Activated CD8-positive, alpha-beta T cell treated with anti-CD3 and anti-CD28 coated beads for 36 hours (primary cell): ENCODE measurements at regions of chr10 and their contacts with region 1.

Region 1: DNA sequence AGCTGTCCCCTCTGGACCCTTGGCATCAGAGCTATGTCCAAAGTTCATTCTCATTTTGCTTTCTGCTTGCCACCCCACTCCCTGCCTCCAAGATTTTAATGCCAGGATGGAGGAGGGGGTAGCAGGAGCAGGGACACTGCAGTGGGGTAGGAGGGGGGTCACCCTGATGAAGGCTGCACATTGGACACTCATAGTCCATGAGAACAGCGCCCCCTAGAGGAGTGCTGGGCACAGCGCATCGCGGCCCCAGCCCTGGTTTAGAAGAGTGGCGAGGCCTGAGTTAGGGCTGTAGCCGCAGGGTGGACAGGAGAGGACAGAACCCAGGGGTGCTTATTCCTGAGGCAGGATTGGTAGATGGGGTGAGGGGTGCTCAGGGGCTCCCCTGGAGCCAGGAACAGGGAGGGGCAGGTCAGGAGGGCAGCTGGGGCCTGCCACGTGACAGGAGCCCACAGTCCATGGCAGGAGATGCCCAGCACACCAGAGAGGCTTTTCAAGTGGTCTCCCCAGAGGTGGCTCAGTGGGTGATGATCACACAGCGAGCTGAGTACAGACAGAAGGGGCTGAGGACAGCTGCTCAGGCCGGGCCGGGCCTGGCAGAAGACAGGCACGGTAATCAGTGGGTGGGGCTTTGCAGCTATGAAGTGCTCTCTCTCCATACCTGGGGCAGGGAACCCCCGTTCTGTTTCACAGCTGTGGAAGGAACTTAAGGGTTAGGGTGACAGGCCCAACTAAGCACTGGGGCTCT is 71.4 kb downstream of the NEURL1 start:
- DNase-seq: peak; percentile 74
- ATAC-seq: peak; percentile 85
- H3K4me3 Mint-ChIP-seq: no peak overlapping the region
- H3K27ac Mint-ChIP-seq: no peak overlapping the region
- H3K4me1 Mint-ChIP-seq: no peaks in the 10 kb centered on the region
- H3K27me3 Mint-ChIP-seq: peaks cover 2% of the 10 kb centered on the region
- CTCF ChIP-seq: peak; percentile 92

Region 2: DNA sequence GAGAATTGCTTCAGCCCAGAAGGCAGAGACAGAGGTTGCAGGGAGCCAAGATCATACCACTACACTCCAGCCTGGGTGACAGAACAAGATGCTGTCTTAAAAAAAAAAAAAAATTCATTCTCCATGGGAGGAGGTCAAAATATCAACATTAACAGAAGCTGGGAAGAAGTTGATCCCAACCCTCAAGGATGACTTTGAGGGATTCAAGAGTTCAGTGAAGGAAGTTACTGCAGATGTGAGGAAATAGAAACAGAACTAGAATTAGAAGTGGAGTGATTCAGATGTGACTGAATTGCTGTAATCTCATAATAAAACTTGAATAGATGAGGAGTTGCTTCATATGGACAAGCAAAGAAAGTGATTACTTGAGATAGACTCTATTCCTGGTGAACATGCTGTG is 339.0 kb before region 1 on chr10:
- CTCF ChIA-PET with region 1: no interaction called
- POLR2A ChIA-PET with region 1: no interaction called
- intact Hi-C with region 1: no loop called
- DNase-seq: no peak
- ATAC-seq: no peak
- H3K4me3 Mint-ChIP-seq: no peak overlapping the region
- H3K27ac Mint-ChIP-seq: no peak overlapping the region
- H3K4me1 Mint-ChIP-seq: no peaks in the 10 kb centered on the region
- H3K27me3 Mint-ChIP-seq: no peaks in the 10 kb centered on the region
- CTCF ChIP-seq: no peak

Region 3: DNA sequence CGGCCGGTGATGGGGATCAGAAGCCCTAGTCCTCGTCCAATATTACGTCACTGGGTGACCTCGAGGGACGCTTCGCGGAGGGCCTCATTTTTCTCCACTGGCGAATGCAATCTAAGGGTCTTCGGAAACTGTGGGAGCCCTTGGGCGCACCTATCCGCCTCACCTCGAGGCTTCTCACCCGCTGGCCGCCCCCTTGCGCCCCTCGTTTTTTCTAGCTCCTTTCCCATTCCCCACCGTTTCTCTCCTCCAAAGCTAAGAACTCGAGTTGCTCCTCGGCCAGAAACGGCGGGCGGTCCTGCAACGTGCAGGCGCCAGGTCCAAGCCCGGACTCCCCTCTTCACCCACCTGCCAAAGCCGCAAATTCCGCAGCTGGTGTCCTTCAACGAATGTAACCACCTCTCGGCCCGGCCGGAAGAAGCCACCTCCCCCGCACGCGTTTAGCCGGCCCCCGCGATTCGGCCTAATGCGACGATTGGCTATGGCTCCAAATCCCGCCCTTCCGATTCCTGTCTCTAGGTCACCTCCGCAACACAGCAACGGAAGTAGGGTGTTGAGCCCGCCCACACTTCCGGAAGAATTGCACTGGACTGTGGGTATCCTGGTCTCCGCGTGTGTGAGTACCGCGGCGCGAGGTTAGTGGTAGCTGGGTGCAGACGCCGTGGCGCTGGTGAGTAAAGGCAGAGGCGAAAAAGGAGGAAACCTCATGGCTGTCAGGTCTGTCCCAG is 168.7 kb before region 1 on chr10 and contains the starts of genes ATP5MK and PDCD11:
- CTCF ChIA-PET with region 1: no interaction called
- POLR2A ChIA-PET with region 1: no interaction called
- intact Hi-C with region 1: no loop called
- DNase-seq: peak; percentile 99
- ATAC-seq: peak; percentile 100
- H3K4me3 Mint-ChIP-seq: peak within 1 kb of the TSS; percentile 88
- H3K27ac Mint-ChIP-seq: peak within 1 kb of the TSS; percentile 97
- H3K4me1 Mint-ChIP-seq: peaks cover 59% of the 10 kb centered on the region
- H3K27me3 Mint-ChIP-seq: no peaks in the 10 kb centered on the region
- CTCF ChIP-seq: no peak
- total RNA-seq, gene ATP5MK: 404 to 425 TPM
- total RNA-seq, gene PDCD11: 63.7 to 68.8 TPM

Region 4: DNA sequence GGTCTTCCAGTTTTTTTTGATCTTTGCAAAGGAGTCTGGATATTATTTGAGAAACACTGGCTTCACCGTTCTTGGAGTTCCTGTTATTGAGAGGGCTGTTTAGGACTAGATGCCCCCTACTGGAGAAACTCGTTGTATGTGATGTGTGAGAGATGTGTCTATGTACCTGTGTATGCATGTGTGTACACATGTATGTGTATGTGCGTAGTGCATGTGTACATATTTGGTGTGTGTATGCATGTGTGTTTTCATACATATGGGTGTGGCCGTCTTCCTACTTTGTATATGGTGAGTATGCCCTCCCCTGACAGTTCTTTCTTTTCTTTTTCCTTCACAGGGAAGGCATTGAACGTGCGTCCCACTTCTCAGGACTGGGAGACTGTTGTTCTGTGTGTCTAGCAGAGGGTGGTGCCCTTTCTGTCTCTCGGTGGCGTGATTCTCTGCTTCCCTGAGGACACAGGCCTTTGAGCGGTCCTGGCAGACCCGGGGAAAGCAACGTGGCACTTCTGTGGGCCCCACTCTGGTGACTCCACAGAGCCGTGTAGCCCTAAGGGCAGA is 82.9 kb before region 1 on chr10:
- CTCF ChIA-PET with region 1: interaction called, 14 read pairs
- POLR2A ChIA-PET with region 1: no interaction called
- intact Hi-C with region 1: no loop called
- DNase-seq: peak; percentile 46
- ATAC-seq: peak; percentile 79
- H3K4me3 Mint-ChIP-seq: no peak overlapping the region
- H3K27ac Mint-ChIP-seq: no peak overlapping the region
- H3K4me1 Mint-ChIP-seq: peaks cover 4% of the 10 kb centered on the region
- H3K27me3 Mint-ChIP-seq: no peaks in the 10 kb centered on the region
- CTCF ChIP-seq: peak; percentile 69

Region 5: DNA sequence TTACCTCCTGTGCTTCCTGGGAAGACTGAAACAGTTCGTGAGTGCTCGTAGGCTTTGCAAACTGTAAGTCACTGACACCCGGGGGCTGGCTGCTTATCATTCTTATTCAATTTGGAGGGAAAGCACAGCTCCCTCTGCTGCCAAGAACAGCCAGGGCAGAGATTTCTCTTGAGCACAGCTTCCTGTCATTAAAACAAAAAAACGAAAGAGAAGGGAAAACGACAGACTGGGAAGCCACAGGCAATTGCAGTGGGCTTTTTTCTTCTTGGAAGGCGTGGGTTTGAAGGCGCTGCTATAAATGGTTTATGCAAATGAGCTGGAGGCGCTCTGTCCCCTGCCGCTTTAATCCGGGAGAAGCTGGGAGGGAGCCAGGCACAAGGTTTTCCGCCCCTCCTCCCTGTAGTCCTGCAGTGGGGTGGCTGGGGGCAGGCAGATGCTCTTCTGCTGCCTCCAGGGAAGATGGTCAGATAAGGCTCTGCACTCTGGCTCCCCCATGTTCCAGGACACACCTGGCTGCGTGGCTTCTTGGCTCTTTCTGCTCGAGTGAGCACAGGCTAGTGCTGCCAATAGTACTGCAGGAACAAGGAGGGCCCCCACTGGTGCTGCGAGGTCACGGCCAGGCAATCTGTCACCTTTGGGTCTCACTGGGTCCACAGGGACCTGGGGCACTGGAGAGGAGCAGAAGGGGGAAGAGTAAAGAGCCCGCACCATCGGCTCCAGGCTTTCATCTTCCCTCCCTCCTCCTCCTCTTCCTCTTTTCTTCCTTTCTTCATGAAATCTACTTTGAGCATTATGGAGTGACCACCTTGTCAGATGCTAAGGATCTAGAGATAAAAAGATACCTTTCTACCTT is 22.0 kb before region 1 on chr10:
- CTCF ChIA-PET with region 1: interaction called, 21 read pairs
- POLR2A ChIA-PET with region 1: no interaction called
- intact Hi-C with region 1: no loop called
- DNase-seq: peak; percentile 64
- ATAC-seq: peak; percentile 78
- H3K4me3 Mint-ChIP-seq: peak overlapping the region; percentile 48
- H3K27ac Mint-ChIP-seq: no peak overlapping the region
- H3K4me1 Mint-ChIP-seq: peaks cover 14% of the 10 kb centered on the region
- H3K27me3 Mint-ChIP-seq: peaks cover 9% of the 10 kb centered on the region
- CTCF ChIP-seq: peak; percentile 49

Region 6: DNA sequence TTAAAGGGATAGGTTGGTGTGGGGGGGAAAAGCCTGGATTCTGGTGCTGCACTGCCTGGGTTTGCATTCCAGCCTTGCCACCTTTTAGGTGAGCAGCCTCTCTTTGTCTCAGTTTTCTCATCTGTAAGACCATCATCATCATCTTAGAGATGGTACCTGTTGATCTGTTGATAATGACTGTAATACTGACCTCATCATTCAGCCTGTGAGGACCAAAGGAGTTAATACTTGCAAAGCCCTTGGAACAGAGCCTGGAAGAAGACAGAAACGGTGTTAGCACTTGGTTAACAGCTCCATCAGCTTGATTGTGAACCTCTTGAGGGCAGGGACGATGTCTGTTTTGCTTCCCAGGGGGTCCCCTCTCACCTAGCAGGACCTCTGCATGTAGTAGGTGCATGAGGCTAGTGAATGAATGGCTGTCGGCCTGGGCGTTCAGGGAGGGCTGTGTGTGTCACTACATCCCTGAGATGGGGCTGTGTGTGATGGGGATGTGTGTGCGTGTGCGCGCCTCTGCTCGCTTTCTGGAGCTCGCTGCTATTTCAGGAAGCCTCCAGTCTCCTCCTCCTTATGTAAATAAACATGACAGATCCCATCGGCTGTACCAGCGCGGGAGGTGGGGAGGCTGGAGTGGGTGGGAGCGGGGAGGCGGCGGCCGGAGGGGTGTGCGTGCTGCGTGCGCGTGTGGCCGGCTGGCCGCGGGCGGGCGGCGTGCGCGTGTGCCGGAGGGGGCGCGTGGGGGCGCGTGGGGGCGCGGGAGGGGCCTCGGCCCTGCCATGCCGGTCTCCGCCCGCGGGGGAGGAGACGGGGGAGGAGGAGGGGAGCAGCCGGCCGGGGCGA is 10.2 kb before region 1 on chr10:
- CTCF ChIA-PET with region 1: interaction called, 21 read pairs
- POLR2A ChIA-PET with region 1: interaction called, 4 read pairs
- intact Hi-C with region 1: no loop called
- DNase-seq: peak; percentile 43
- ATAC-seq: peak; percentile 46
- H3K4me3 Mint-ChIP-seq: peak overlapping the region; percentile 60
- H3K27ac Mint-ChIP-seq: no peak overlapping the region
- H3K4me1 Mint-ChIP-seq: peaks cover 18% of the 10 kb centered on the region
- H3K27me3 Mint-ChIP-seq: peaks cover 30% of the 10 kb centered on the region
- CTCF ChIP-seq: no peak

Region 7: DNA sequence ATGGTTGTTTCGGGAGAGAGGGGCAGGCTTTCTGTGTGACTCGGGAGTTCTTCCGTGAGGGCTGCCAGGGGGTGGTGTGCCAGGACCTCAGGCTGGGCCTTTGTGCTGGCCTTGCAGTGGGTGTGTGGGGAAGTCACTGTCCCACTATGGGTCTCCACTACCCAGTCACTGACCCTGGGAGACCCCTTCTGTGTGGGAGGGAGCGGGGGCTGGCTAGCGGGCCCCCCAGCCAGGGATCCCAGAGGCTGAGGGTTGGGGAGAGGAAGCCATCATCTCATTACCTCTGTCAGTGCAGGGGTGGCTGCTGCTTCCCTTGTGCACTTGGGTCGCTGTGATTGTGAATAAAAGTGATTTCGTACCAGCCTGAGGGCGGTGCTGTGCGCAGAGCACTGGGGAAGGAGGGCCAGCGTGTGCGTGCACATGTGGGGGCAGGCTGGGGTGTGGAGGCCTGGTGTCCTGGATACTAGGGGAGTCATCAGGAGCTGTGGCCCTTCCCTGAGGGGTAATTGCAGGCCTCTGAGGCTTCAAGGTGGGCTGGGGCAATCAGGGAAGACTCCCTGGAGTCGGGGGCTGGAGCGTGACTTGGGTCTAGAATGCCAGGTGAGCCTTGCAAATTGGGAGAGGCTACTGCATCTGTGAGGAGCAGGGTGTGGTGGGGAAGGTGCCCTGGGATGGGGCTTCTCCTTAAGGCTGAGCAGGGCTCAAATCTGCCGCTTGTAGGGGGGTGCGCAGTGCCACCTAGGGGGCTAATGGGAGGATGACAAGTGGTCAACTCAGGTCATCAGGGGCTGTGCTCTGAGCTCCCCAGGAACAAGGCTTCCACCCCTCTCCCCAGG is 27.5 kb after region 1 on chr10:
- CTCF ChIA-PET with region 1: interaction called, 15 read pairs
- POLR2A ChIA-PET with region 1: no interaction called
- intact Hi-C with region 1: no loop called
- DNase-seq: peak; percentile 73
- ATAC-seq: peak; percentile 91
- H3K4me3 Mint-ChIP-seq: no peak overlapping the region
- H3K27ac Mint-ChIP-seq: no peak overlapping the region
- H3K4me1 Mint-ChIP-seq: no peaks in the 10 kb centered on the region
- H3K27me3 Mint-ChIP-seq: no peaks in the 10 kb centered on the region
- CTCF ChIP-seq: peak; percentile 66